ENCODE measurements at regions of chr19 and their contacts with region 1.

Region 1: GRCh38 chr19:16382775-16383543 is 58.3 kb downstream of the KLF2 start:
- DNase-seq: peak in 1 of 2 donors; percentile 90
- H3K4me3 ChIP-seq: no peak overlapping the region
- H3K27ac ChIP-seq: peak overlapping the region; percentile 30 to 93 (median 90)
- H3K4me1 ChIP-seq: peaks cover 28 to 52% of the 10 kb centered on the region in 2 donors
- H3K27me3 ChIP-seq: no peaks in the 10 kb centered on the region
- CTCF ChIP-seq: peak; percentile 51 to 93 (median 86)
- POLR2A ChIP-seq: peak in 1 of 2 donors; percentile 26

Region 2: DNA sequence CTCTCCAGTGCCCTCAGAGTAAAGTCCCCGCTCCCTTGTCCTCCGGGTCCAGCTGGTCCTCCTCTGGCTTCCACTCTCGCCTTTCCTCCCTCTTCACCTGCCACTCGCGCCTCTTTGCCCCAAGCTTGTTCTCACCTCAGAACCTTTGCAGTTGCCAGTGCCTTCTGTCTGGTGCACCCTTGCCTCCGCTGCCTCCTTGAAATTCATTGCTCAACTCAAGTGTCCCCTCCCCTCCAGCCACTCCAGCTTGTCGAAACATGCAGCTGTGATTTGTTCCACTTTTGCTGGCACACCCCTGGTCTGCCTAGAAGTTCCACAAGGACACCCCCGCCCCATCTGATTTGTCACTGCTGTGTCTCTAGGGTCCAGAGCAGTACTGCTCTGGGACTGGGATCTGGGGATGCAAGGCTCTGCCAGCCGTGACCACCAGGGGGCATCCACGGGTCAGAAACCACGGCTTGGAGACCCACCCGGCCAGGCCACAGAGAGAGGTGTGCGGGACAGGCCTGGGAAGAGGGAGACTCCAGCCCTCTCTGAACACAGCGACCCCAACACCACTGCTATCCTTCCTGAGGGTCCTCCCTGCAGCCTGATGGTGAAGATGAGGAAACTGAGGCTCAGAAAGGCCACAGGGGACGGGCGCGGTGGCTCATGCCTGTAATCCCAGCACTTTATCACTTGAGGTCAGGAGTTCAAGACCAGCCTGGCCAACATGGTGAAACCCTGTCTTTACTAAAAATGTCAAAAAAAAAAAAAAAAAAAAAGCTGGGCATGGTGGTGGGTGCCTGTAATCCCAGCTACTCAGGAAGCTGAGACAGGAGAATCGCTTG is 135.4 kb before region 1 on chr19:
- intact Hi-C with region 1: loop called (anchors 2 kb)
- DNase-seq: peak; percentile 84 to 85
- H3K4me3 ChIP-seq: no peak overlapping the region
- H3K27ac ChIP-seq: peak overlapping the region in 1 of 3 donors; percentile 28
- H3K4me1 ChIP-seq: peaks cover 0 to 17% of the 10 kb centered on the region in 2 donors
- H3K27me3 ChIP-seq: no peaks in the 10 kb centered on the region
- CTCF ChIP-seq: peak; percentile 82 to 97 (median 94)
- POLR2A ChIP-seq: peak in 1 of 2 donors; percentile 16

Region 3: DNA sequence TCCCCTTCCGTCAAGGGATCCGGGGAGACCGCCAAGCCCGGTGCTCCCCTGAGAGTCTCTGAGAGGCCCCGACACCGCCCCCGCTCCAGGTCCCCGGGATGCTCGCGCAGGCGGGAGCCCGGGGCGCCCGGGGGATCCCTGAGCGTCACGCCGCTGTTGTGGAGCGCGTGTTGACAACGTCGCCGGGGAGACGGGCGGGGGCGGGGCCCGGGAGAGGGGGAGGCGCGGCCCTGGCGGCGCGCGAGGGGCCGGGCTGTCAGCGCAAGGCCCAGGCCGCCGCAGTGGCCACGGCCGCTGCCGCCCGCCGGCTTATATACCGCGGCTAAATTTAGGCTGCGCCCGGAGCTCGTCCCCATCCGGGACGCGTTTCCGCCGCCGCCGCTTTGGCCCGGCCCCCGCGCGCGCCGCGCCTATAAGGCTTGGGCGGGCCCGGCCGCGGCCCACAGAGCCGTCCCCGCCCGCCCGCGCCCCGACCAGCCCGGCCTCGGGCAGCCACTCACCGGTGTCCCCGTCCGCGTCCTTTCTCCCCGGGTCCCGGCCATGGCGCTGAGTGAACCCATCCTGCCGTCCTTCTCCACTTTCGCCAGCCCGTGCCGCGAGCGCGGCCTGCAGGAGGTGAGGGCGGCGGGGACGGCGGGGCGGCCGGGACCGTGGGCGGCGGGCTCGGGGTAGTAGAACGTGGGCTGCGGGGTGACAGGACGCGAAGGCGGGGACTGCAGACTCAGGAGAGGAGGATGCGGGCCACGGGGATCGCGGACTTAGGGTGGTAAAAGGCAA is 58.4 kb before region 1 on chr19 and contains the start of gene KLF2:
- intact Hi-C with region 1: loop called (anchors 5 kb)
- DNase-seq: peak; percentile 81 to 85
- H3K4me3 ChIP-seq: peak within 1 kb of the TSS; percentile 14 to 89 (median 88)
- H3K27ac ChIP-seq: peak within 1 kb of the TSS; percentile 78 to 96 (median 93)
- H3K4me1 ChIP-seq: peaks cover 0 to 50% of the 10 kb centered on the region in 2 donors
- H3K27me3 ChIP-seq: no peaks in the 10 kb centered on the region
- CTCF ChIP-seq: no peak
- POLR2A ChIP-seq: peak; percentile 91 to 94
- total RNA-seq, gene KLF2: 9.1 to 15.9 (median 14.0) TPM

Region 4: DNA sequence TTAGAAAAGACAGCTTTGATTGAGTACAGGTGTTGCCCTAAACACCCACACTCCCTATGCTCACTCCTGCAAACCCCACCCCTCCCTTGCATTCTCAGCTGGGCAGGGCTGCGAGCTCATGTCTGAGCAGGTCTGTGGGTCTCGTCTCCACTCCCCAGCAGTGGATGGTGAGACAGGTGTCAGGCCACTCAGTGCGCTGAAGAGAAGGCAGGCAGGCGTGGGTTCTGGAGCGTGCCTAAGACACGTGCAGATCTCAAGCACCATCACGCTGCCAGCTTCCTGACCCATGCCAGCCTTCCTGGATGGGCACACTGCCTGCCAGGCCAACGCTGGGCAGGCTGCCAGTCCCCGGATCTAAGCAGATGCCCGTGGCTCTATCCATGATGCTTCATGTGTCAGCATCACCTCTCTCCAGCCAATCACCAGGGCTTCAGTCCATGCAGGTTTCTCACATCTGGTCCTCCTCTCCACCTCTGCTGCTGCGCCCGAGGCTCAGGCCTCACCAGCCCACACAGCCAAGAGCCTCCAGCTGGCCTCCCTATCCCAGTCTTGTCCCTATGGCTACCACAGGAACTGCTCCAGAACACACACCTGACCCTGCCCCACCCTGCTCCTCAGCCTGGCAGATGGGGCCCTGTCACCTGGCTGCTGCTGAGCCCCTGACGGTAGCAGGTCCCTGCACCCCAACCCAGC is 46.3 kb after region 1 on chr19:
- intact Hi-C with region 1: no loop called
- DNase-seq: peak; percentile 94 to 95
- H3K4me3 ChIP-seq: no peak overlapping the region
- H3K27ac ChIP-seq: no peak overlapping the region
- H3K4me1 ChIP-seq: peaks cover 0 to 10% of the 10 kb centered on the region in 2 donors
- H3K27me3 ChIP-seq: no peaks in the 10 kb centered on the region
- CTCF ChIP-seq: no peak
- POLR2A ChIP-seq: no peak